ENCODE measurements at regions of chr1 and their contacts with region 1.

Region 1: GRCh38 chr1:178607718-178608408 is 95.0 kb downstream of the TEX35 start:
- DNase-seq: peak; percentile 44
- ATAC-seq: peak; percentile 45
- H3K4me3 Mint-ChIP-seq: peak overlapping the region; percentile 74
- H3K27ac Mint-ChIP-seq: peak overlapping the region; percentile 99
- H3K4me1 Mint-ChIP-seq: peaks cover 92% of the 10 kb centered on the region
- H3K27me3 Mint-ChIP-seq: no peaks in the 10 kb centered on the region
- CTCF ChIP-seq: no peak

Region 2: GRCh38 chr1:178532392-178532791 is 75.5 kb before region 1 on chr1:
- CTCF ChIA-PET with region 1: no interaction called
- POLR2A ChIA-PET with region 1: no interaction called
- intact Hi-C with region 1: no loop called
- DNase-seq: peak; percentile 77
- ATAC-seq: peak; percentile 93
- H3K4me3 Mint-ChIP-seq: no peak overlapping the region
- H3K27ac Mint-ChIP-seq: no peak overlapping the region
- H3K4me1 Mint-ChIP-seq: peaks cover 4% of the 10 kb centered on the region
- H3K27me3 Mint-ChIP-seq: no peaks in the 10 kb centered on the region
- CTCF ChIP-seq: peak; percentile 84

Region 3: DNA sequence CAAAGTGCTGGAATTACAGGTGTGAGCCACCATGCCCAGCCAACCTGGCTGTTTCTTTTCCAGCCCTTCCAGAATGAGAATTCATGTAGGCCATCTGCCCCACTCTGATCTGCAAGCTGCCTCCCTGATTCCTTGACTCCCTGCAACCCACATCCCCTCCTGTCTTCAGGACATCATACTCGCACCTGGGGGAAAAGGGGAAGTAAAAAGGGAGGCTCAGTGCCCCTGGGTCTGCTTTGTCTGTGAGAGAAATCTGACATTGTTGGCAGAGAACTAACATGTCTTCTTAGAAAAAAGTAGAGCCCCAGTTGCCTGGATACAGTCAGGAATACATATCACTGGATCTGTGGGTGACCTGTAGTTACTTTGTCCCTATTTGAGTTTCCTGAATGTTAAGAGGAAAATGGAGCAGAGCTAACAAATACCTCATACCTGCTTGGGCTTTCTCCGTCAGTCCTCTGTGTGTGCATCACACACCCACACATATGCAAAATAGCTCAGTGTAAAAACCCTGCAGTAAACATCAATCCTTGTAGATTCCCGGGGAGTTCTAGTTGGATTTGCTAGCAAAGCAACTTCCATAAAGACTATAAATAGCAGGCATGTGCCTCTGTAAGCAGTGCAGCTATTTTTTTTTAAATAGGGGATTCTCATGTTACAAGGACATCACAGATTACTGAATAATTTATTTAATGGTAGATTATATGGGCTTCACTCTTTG is 32.1 kb before region 1 on chr1:
- CTCF ChIA-PET with region 1: interaction called, 9 read pairs
- POLR2A ChIA-PET with region 1: interaction called, 394 read pairs
- intact Hi-C with region 1: no loop called
- DNase-seq: no peak
- ATAC-seq: peak; percentile 36
- H3K4me3 Mint-ChIP-seq: peak overlapping the region; percentile 65
- H3K27ac Mint-ChIP-seq: peak overlapping the region; percentile 98
- H3K4me1 Mint-ChIP-seq: peaks cover 83% of the 10 kb centered on the region
- H3K27me3 Mint-ChIP-seq: no peaks in the 10 kb centered on the region
- CTCF ChIP-seq: no peak

Region 4: DNA sequence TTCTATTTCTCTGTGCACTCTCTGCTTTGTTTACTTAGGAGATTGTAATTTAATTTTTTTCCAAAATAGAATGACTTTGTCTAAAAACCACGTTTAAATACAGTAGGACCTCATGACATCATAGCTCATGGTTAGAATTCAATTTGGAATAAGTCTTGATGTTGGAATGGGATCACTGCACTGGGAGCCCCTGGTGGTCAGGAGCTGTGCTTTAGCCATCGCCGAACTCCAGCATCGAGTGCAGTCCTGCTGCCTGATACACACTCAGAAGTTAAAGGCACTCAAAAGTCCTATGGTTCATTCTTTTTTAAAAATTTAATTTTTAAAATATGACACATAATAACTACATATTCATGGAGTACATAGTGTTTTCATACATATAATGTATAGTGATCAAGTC is 19.9 kb before region 1 on chr1:
- CTCF ChIA-PET with region 1: interaction called, 4 read pairs
- POLR2A ChIA-PET with region 1: interaction called, 394 read pairs
- intact Hi-C with region 1: loop called (anchors 1 kb)
- DNase-seq: no peak
- ATAC-seq: no peak
- H3K4me3 Mint-ChIP-seq: no peak overlapping the region
- H3K27ac Mint-ChIP-seq: no peak overlapping the region
- H3K4me1 Mint-ChIP-seq: peaks cover 90% of the 10 kb centered on the region
- H3K27me3 Mint-ChIP-seq: no peaks in the 10 kb centered on the region
- CTCF ChIP-seq: no peak

Region 5: GRCh38 chr1:178625701-178626100 is 17.8 kb after region 1 on chr1:
- CTCF ChIA-PET with region 1: interaction called, 3 read pairs
- POLR2A ChIA-PET with region 1: interaction called, 10 read pairs
- intact Hi-C with region 1: loop called (anchors 2 kb)
- DNase-seq: no peak
- ATAC-seq: no peak
- H3K4me3 Mint-ChIP-seq: no peak overlapping the region
- H3K27ac Mint-ChIP-seq: no peak overlapping the region
- H3K4me1 Mint-ChIP-seq: peaks cover 59% of the 10 kb centered on the region
- H3K27me3 Mint-ChIP-seq: no peaks in the 10 kb centered on the region
- CTCF ChIP-seq: no peak

Region 6: DNA sequence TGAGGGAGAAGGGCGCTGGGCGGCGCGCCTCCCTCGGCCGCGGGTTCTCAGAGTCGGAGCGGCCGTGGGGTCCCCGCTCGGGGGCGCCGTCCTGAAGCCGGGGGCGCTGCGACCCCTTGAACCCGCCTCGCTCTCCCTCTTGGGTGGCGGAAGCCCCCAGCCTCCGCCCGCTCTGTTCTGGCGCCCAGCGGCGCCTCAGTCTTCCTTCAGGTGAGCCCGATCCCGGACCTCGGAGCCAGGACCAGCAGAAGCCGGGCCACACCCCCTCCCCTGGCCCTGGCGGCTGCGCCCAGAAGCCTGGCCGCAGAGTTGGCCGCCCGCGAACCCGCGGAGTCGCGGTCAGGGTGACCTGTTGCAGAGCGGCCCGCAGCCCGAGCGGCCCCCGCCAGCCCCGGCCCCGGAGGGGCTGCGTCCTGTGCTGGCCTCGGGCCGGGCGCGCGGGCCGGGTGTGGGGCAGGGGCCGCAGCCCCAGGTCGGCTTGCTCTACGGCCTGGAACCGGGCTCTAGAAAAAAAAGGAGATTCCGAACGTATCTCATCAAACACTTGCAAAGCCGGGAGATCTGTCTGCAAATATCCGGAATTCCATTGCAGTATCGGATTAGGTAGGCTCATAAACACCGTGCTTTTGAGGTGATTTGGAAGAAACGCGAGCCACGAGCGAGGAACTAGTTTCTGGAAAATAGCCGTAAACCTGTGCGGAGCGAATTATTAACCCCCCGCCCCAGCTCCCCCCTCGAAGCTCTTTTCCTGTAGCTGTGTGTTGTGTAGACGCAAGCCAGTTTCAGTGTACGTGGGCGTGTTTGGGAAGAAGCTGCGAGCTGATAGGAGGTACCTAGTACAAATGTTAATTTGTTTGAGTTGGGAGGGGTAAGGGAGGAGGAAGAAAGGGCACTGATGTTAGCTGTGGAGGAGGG is 118.0 kb after region 1 on chr1:
- CTCF ChIA-PET with region 1: interaction called, 5 read pairs
- POLR2A ChIA-PET with region 1: interaction called, 119 read pairs
- intact Hi-C with region 1: loop called (anchors 1 kb)
- DNase-seq: peak; percentile 53
- ATAC-seq: peak; percentile 74
- H3K4me3 Mint-ChIP-seq: peak overlapping the region; percentile 92
- H3K27ac Mint-ChIP-seq: peak overlapping the region; percentile 96
- H3K4me1 Mint-ChIP-seq: peaks cover 55% of the 10 kb centered on the region
- H3K27me3 Mint-ChIP-seq: no peaks in the 10 kb centered on the region
- CTCF ChIP-seq: no peak

Region 7: GRCh38 chr1:178870944-178871343 is 263.1 kb after region 1 on chr1 and contains the start of gene ANGPTL1:
- CTCF ChIA-PET with region 1: no interaction called
- POLR2A ChIA-PET with region 1: no interaction called
- intact Hi-C with region 1: no loop called
- DNase-seq: no peak
- ATAC-seq: no peak
- H3K4me3 Mint-ChIP-seq: no peak within 1 kb of the TSS
- H3K27ac Mint-ChIP-seq: peak within 1 kb of the TSS; percentile 77
- H3K4me1 Mint-ChIP-seq: peaks cover 39% of the 10 kb centered on the region
- H3K27me3 Mint-ChIP-seq: no peaks in the 10 kb centered on the region
- CTCF ChIP-seq: no peak
- total RNA-seq, gene ANGPTL1: not detected in 2 replicates

Region 8: DNA sequence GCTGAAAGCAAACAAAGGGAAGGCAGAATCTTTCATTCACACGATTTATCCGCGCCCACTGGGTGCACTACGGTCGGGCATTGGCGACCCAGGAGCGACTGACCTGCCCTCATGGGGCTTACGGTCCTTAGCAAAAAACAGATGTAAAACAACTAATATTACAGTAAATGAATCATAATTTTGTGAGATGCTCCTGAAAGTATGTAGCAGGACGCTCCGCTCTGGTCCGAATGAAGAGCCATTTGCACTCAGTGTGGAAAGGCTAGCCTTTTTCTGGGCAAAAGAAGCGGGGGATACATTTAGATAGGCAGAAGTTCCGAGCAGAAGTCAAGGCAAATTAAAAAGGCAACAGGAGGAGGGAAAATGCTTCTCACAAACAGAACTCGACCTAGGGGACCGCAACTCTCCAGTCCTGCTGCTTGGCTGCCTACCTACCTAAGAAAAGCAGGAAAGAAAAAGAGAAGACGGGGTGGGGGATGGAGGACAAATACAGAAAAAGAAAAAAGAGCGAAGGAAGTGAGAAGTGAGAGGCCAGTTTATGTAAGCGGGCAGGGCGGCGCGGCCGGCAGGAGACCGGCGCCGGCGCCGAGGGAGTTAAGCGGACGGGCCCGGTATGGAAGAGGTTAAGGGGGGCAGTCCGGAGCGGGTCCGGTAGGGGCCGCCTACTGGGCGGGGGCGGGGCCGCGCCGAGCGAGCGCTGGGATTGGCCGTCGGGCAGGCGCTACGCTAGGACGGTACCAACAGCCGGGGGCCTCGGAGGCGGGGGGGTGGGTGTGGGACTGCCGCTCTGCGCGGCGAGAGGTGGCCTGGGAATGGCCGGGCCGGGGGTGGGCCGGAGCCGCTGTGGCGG is 417.5 kb after region 1 on chr1 and contains the start of gene FAM20B:
- CTCF ChIA-PET with region 1: no interaction called
- POLR2A ChIA-PET with region 1: no interaction called
- intact Hi-C with region 1: loop called (anchors 5 kb)
- DNase-seq: peak; percentile 90
- ATAC-seq: peak; percentile 84
- H3K4me3 Mint-ChIP-seq: peak within 1 kb of the TSS; percentile 90
- H3K27ac Mint-ChIP-seq: peak within 1 kb of the TSS; percentile 90
- H3K4me1 Mint-ChIP-seq: peaks cover 43% of the 10 kb centered on the region
- H3K27me3 Mint-ChIP-seq: no peaks in the 10 kb centered on the region
- CTCF ChIP-seq: no peak
- total RNA-seq, gene FAM20B: 26.3 and 27.5 TPM in 2 replicates